Colonic mucosa (tissue), 4 donors: ENCODE measurements at regions of chr18 and their contacts with region 1.

Region 1: DNA sequence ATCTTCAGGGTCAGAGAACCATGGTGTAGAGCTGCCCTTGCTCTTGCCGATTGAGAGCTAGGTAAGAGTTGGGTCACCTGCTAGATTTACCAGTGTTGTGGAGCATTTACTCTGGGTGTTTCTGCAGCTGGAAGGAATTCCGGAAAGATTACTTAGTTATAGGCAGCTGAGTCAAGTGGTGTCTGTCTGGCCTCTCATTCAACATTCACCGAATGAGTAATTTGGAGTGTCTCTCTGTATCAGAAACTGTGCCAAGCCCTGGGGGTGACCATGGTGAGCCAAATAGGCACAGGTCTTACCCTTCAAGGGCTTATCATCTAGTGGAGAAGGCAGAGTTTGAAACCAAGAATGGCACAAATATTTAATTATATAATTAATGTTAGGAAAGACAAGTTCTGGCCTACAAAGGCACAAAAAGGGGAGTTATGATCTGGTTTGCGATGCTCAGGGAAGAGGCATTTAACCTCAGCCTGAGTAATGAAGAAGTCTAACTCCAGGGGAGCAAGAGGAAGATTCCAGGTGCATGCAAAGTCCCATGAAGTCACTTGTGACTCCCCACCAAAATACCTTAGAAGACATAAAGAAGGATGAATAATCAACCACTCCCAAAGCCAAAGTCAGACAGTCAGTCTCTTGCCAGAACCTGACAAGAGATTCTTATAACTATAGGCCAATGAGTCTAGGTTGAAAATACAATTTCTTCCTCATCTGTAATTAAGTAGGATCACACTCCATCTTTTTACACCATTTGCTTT is 12.5 kb downstream of the SETBP1 start:
- DNase-seq: no peak
- H3K4me3 ChIP-seq: no peak overlapping the region
- H3K27ac ChIP-seq: no peak overlapping the region
- H3K4me1 ChIP-seq: no peaks in the 10 kb centered on the region
- H3K27me3 ChIP-seq: no peaks in the 10 kb centered on the region
- CTCF ChIP-seq: no peak

Region 2: DNA sequence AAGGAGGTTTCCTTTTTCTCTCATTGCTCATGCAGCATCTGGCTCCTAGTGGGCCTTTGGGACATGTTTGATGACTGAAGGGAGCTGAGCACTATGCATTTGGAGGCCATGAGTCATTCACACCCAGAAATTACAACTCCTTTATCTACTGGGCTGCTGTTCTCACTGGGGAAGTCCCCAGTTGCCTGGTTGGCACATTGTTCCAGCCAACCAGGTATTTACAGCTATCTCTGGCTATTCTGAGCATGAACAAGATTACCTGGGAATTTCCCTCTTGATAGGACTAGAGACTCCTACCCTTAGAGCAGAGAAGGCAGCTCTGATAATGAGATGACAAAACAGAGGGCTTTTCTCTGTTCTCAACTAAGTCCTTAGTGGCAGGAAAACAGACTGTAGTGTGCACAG is 194.0 kb after region 1 on chr18:
- intact Hi-C with region 1: loop called (anchors 5 kb)
- DNase-seq: peak; percentile 41
- H3K4me3 ChIP-seq: no peak overlapping the region
- H3K27ac ChIP-seq: no peak overlapping the region
- H3K4me1 ChIP-seq: no peaks in the 10 kb centered on the region
- H3K27me3 ChIP-seq: no peaks in the 10 kb centered on the region
- CTCF ChIP-seq: no peak

Region 3: GRCh38 chr18:44996261-44996660 is 303.1 kb after region 1 on chr18:
- intact Hi-C with region 1: no loop called
- DNase-seq: no peak
- H3K4me3 ChIP-seq: no peak overlapping the region
- H3K27ac ChIP-seq: no peak overlapping the region
- H3K4me1 ChIP-seq: no peaks in the 10 kb centered on the region
- H3K27me3 ChIP-seq: no peaks in the 10 kb centered on the region
- CTCF ChIP-seq: no peak